ENCODE measurements at regions of chr4 and their contacts with region 1.

Region 1: DNA sequence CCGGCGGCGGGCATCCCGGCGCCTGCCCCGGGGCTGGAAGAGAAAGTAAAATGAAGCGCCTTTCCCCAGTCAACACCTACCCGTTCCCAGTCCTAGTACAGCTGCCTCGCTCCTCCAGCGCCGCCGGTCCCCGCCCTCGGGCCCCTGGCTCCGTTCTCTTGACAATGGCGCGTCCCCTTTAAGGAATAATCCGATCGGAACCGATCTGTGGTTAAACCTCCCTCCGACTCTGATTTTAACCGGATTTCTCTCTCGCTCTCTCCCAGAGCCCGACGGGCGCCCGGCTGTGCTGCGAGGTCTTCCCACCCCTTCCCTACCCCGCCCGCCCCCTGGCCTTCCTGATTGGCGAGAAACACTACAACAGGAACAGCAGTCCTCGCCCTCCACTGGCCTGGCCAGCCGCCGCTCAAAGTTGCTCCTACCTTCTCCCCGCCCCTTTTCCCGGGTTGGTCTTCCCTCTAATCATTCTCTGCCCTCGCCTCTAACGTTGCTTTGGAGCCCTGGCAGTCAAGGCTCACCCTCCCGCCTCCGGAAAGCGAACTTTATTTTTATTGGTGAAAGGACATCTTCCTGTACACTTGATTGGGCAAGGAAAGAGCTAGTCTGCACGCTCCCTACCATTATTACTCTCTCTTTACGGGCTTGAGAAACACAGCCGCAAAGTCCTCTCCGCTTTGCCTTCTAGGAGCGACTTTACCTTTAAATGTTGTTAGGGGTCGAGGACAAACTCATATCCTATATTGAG is at the start of gene FRYL:
- DNase-seq: peak; percentile 96
- H3K4me3 Mint-ChIP-seq: peak within 1 kb of the TSS; percentile 90
- H3K27ac Mint-ChIP-seq: peak within 1 kb of the TSS; percentile 90
- H3K4me1 Mint-ChIP-seq: peaks cover 46% of the 10 kb centered on the region
- H3K27me3 Mint-ChIP-seq: no peaks in the 10 kb centered on the region
- total RNA-seq, gene FRYL: 70.3 and 80.0 TPM in 2 replicates

Region 2: GRCh38 chr4:48133669-48134068 is 646.5 kb before region 1 on chr4:
- intact Hi-C with region 1: loop called (anchors 2 kb)
- DNase-seq: no peak
- H3K4me3 Mint-ChIP-seq: peak overlapping the region; percentile 90
- H3K27ac Mint-ChIP-seq: peak overlapping the region; percentile 88
- H3K4me1 Mint-ChIP-seq: peaks cover 83% of the 10 kb centered on the region
- H3K27me3 Mint-ChIP-seq: no peaks in the 10 kb centered on the region

Region 3: GRCh38 chr4:48578132-48578968 is 201.8 kb before region 1 on chr4:
- intact Hi-C with region 1: loop called (anchors 2 kb)
- DNase-seq: peak; percentile 17
- H3K4me3 Mint-ChIP-seq: no peak overlapping the region
- H3K27ac Mint-ChIP-seq: peak overlapping the region; percentile 6
- H3K4me1 Mint-ChIP-seq: peaks cover 10% of the 10 kb centered on the region
- H3K27me3 Mint-ChIP-seq: no peaks in the 10 kb centered on the region

Region 4: DNA sequence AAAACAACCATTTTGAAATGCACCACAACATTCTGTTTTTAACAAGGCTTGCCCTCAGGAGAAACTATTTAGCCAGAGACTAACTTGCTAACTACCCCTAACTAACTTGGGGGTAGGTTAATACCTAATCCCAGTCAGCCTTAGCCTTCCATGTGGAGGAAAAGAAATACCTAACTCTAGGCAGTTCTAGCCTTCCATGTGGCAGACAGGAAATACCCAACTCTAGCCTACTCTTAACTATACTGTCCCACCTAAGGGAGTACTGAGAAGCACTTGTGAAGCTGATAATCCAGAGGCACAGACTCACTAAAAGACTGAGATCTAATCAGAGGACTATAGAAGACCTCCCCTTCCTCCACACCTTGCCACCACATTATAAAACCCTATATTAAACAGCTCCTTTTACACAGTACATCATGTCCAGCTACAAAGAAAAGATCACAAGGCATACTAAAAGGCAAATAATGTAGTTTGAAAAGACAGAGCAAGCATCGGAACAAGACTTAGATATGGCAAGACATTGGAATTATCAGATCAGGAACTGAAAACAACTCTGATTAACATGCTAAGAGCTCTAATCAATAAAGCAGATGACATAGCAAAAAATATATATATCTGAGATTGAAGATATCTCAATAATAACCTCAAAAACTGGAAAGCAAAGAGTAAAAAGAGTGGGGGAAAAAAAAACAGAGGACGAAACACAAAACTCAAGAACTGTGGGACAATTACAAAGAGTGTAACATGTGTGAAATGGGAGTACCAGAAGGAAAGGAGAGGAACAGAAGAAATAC is 52.3 kb before region 1 on chr4:
- intact Hi-C with region 1: loop called (anchors 1 kb)
- DNase-seq: no peak
- H3K4me3 Mint-ChIP-seq: no peak overlapping the region
- H3K27ac Mint-ChIP-seq: peak overlapping the region; percentile 47
- H3K4me1 Mint-ChIP-seq: peaks cover 88% of the 10 kb centered on the region
- H3K27me3 Mint-ChIP-seq: no peaks in the 10 kb centered on the region

Region 5: DNA sequence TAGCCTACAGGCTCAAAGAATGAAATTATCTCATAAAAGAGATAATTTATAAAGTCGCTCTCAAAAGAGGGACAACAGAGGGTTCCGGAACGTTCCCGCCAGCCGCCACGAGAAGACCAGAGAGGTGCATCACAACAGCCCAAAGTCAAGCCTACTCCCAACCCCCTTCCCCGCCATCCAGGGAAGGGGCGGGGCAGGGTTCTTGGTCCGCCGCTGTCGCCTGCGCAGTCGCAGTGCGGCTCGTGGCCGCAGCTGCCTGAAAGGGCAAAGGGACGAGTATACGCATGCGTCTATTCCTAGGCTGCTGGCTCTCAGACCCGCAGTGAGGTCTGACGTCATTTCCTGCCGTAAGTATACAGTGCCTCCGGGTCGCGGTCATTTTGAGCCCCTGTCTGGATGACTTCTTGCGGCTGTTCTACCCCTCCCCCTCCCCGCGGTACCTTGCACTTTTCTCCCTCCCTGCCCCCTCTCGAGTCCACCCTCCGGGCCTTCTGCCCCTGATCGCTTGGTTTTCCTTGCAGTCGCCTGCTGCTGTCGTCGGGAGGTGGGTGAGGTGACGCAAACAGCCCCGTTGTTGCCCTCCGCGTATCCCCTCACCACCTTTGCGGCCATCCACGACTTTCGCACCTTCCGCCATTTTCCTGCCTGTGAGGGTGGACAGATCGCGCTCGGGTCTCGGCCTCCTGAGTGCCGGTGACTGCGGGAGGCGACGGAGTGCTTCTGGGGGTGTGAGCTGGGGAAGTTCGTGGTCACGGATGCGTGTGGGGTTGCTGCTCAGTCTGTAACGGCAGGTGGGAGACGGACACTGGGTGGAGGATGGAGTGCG is 50.7 kb after region 1 on chr4 and contains the start of gene OCIAD1:
- intact Hi-C with region 1: loop called (anchors 1 kb)
- DNase-seq: peak; percentile 94
- H3K4me3 Mint-ChIP-seq: peak within 1 kb of the TSS; percentile 99
- H3K27ac Mint-ChIP-seq: peak within 1 kb of the TSS; percentile 100
- H3K4me1 Mint-ChIP-seq: peaks cover 26% of the 10 kb centered on the region
- H3K27me3 Mint-ChIP-seq: peaks cover 2% of the 10 kb centered on the region
- total RNA-seq, gene OCIAD1: 120 and 122 TPM in 2 replicates